ENCODE measurements at regions of chr12 and their contacts with region 1.

Region 1: GRCh38 chr12:117874842-117875434 is 93.9 kb downstream of the KSR2 start:
- DNase-seq: peak; percentile 84
- ATAC-seq: peak; percentile 70
- H3K4me3 Mint-ChIP-seq: no peak overlapping the region
- H3K27ac Mint-ChIP-seq: no peak overlapping the region
- H3K4me1 Mint-ChIP-seq: peaks cover 12% of the 10 kb centered on the region
- H3K27me3 Mint-ChIP-seq: peaks cover 11% of the 10 kb centered on the region

Region 2: DNA sequence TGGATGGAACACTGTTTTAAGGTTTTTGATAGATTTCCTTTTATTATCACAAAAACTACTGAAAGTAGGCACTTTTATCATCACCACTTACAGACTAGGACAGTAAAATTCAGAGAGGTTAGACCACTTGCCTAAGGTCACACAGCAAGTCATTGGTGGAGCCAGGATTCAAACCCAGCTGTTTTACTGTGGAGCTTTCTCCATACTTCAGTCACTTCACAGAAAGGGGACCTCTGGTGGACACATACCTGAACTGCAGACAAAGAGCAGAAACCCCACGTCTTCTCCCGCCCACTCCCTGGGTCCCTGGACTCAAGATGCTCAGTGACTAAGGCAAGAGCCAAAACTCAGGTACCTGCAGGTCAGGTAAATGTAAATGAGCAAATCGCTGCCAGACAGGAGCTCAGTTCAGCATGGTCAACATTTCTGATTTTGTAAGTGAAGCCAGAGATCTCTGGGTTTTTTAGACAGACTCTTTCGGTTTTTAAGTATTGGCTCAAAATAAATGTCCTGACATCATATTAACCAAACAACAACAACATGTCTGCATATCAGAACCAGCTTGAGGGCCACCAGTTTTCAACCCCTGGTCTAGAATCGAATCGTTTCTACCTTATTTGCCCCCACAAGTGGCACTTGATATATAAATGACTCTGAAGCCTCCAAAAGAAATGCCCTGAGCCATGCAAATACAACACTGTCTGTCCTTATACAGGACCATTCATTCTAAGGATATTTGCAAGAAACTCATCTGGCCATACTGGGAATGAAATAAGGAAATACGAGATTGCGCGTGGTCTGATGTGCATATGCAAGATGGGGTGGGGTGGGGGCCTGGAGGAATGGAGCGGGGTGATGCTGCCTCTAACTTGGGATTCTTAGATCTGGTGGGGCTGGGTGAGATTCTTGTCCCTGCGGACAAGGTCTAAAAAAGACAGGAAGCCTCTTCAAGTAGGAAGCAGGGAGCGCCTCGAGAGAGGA is 17.0 kb before region 1 on chr12:
- CTCF ChIA-PET with region 1: interaction called, 37 read pairs
- POLR2A ChIA-PET with region 1: no interaction called
- intact Hi-C with region 1: no loop called
- DNase-seq: peak; percentile 82
- ATAC-seq: peak; percentile 61
- H3K4me3 Mint-ChIP-seq: no peak overlapping the region
- H3K27ac Mint-ChIP-seq: no peak overlapping the region
- H3K4me1 Mint-ChIP-seq: peaks cover 2% of the 10 kb centered on the region
- H3K27me3 Mint-ChIP-seq: peaks cover 2% of the 10 kb centered on the region

Region 3: GRCh38 chr12:118016424-118017264 is 141.7 kb after region 1 on chr12 and contains the start of gene RFC5:
- CTCF ChIA-PET with region 1: interaction called, 6 read pairs
- POLR2A ChIA-PET with region 1: no interaction called
- intact Hi-C with region 1: loop called (anchors 1 to 2 kb)
- DNase-seq: peak; percentile 99
- ATAC-seq: peak; percentile 98
- H3K4me3 Mint-ChIP-seq: peak within 1 kb of the TSS; percentile 97
- H3K27ac Mint-ChIP-seq: peak within 1 kb of the TSS; percentile 90
- H3K4me1 Mint-ChIP-seq: peaks cover 15% of the 10 kb centered on the region
- H3K27me3 Mint-ChIP-seq: no peaks in the 10 kb centered on the region
- total RNA-seq, gene RFC5: 63.0 to 78.9 TPM

Region 4: DNA sequence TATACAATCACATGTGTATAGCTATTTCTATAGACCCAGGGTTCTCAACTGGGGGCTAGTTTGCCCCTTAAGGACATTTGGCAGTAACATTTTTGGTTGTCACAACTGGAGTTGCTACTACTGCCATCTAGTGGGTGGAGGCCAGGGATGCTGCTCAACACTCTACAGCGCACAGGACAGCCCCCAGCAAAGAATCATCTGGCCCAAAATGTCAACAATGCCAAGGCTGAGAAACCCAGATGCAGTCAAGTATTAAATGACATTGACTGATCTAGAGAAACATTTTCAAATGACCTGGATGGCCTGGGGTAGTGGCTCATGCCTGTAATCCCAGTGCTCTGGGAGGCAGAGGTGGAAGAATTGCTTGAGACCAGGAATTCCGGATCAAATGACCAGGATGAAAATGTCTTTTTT is 180.2 kb after region 1 on chr12:
- CTCF ChIA-PET with region 1: interaction called, 15 read pairs
- POLR2A ChIA-PET with region 1: no interaction called
- intact Hi-C with region 1: loop called (anchors 1 kb)
- DNase-seq: peak; percentile 87
- ATAC-seq: peak; percentile 76
- H3K4me3 Mint-ChIP-seq: no peak overlapping the region
- H3K27ac Mint-ChIP-seq: no peak overlapping the region
- H3K4me1 Mint-ChIP-seq: peaks cover 53% of the 10 kb centered on the region
- H3K27me3 Mint-ChIP-seq: no peaks in the 10 kb centered on the region

Region 5: GRCh38 chr12:118103604-118104382 is 228.9 kb after region 1 on chr12 and contains the start of gene VSIG10:
- CTCF ChIA-PET with region 1: interaction called, 4 read pairs
- POLR2A ChIA-PET with region 1: no interaction called
- intact Hi-C with region 1: loop called in 1 of 2 experiments (anchors 10 kb)
- DNase-seq: peak; percentile 35
- ATAC-seq: peak; percentile 61
- H3K4me3 Mint-ChIP-seq: peak within 1 kb of the TSS; percentile 71
- H3K27ac Mint-ChIP-seq: no peak within 1 kb of the TSS
- H3K4me1 Mint-ChIP-seq: peaks cover 6% of the 10 kb centered on the region
- H3K27me3 Mint-ChIP-seq: peaks cover 19% of the 10 kb centered on the region
- total RNA-seq, gene VSIG10: 6.5 to 8.2 TPM

Region 6: GRCh38 chr12:118135788-118136558 is 261.0 kb after region 1 on chr12 and contains the start of gene PEBP1:
- CTCF ChIA-PET with region 1: interaction called, 3 read pairs
- POLR2A ChIA-PET with region 1: interaction called, 4 read pairs
- intact Hi-C with region 1: loop called (anchors 1 to 10 kb)
- DNase-seq: peak; percentile 97
- ATAC-seq: peak; percentile 99
- H3K4me3 Mint-ChIP-seq: peak within 1 kb of the TSS; percentile 88
- H3K27ac Mint-ChIP-seq: peak within 1 kb of the TSS; percentile 91
- H3K4me1 Mint-ChIP-seq: peaks cover 33% of the 10 kb centered on the region
- H3K27me3 Mint-ChIP-seq: no peaks in the 10 kb centered on the region
- total RNA-seq, gene PEBP1: 117 to 134 TPM

Region 7: DNA sequence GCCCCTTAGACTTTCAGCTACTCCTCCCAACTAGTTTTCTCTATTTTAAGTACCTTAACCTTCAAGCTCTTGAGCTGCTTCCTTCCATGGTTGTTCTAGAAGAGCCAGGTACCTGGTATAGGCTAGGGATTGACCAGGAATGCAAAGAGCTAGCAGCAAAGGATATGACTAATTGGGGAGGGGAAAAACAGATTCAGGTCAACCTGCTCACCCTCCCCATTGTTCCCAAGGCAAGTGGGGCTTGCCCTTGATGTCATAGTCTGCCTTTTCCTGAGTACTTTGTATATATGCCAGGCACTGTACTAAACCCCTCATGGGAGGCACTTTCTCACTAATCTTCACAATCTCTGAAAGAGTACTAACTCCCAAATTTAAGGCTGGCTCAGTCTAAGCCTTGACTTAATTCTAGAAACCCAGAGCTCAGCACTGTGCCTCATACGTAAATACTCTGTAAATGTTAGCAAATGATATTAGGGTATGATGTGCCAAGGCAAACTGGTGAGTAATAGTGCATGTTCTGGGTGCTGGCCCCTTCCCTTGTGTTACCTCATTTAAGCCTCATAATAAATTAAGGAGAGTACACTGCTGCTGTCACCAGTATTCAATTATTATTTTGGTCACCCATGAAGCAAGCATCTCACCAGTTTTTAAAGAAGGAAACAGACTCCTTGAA is 543.6 kb after region 1 on chr12:
- CTCF ChIA-PET with region 1: no interaction called
- POLR2A ChIA-PET with region 1: no interaction called
- intact Hi-C with region 1: no loop called
- DNase-seq: no peak
- ATAC-seq: peak; percentile 30
- H3K4me3 Mint-ChIP-seq: no peak overlapping the region
- H3K27ac Mint-ChIP-seq: no peak overlapping the region
- H3K4me1 Mint-ChIP-seq: no peaks in the 10 kb centered on the region
- H3K27me3 Mint-ChIP-seq: no peaks in the 10 kb centered on the region